ENCODE measurements at regions of chr4 and their contacts with region 1.

Region 1: GRCh38 chr4:121869841-121870656 is at the start of gene BBS7:
- DNase-seq: peak; percentile 99
- H3K4me3 ChIP-seq: peak within 1 kb of the TSS; percentile 70 to 85 (median 77)
- H3K27ac ChIP-seq: peak within 1 kb of the TSS; percentile 92 to 95 (median 93)
- H3K4me1 ChIP-seq: peaks cover 0 to 11% (median 9%) of the 10 kb centered on the region in 4 donors
- H3K27me3 ChIP-seq: no peaks in the 10 kb centered on the region
- CTCF ChIP-seq: no peak
- EP300 ChIP-seq: no peak
- POLR2A ChIP-seq: peak; percentile 76
- total RNA-seq, gene BBS7: 12.6 to 17.6 (median 14.0) TPM

Region 2: GRCh38 chr4:121827853-121828252 is 42.2 kb before region 1 on chr4:
- in situ Hi-C with region 1: no loop called
- intact Hi-C with region 1: loop called (anchors 5 kb)
- DNase-seq: no peak
- H3K4me3 ChIP-seq: no peak overlapping the region
- H3K27ac ChIP-seq: no peak overlapping the region
- H3K4me1 ChIP-seq: peaks cover 4 to 11% (median 7%) of the 10 kb centered on the region in 4 donors
- H3K27me3 ChIP-seq: no peaks in the 10 kb centered on the region
- CTCF ChIP-seq: no peak
- EP300 ChIP-seq: no peak
- POLR2A ChIP-seq: no peak

Region 3: GRCh38 chr4:121908346-121908745 is 38.3 kb after region 1 on chr4:
- in situ Hi-C with region 1: no loop called
- intact Hi-C with region 1: no loop called
- DNase-seq: no peak
- H3K4me3 ChIP-seq: no peak overlapping the region
- H3K27ac ChIP-seq: no peak overlapping the region
- H3K4me1 ChIP-seq: no peaks in the 10 kb centered on the region
- H3K27me3 ChIP-seq: no peaks in the 10 kb centered on the region
- CTCF ChIP-seq: no peak
- EP300 ChIP-seq: no peak
- POLR2A ChIP-seq: no peak

Measured in transverse colon (tissue), 4 donors.